ENCODE measurements at regions of chr1 and their contacts with region 1.

Region 1: GRCh38 chr1:19240673-19241538 is 10.4 kb downstream of the EMC1 start:
- DNase-seq: peak; percentile 71
- H3K4me3 Mint-ChIP-seq: no peak overlapping the region
- H3K27ac Mint-ChIP-seq: no peak overlapping the region
- H3K4me1 Mint-ChIP-seq: no peaks in the 10 kb centered on the region
- H3K27me3 Mint-ChIP-seq: no peaks in the 10 kb centered on the region

Region 2: DNA sequence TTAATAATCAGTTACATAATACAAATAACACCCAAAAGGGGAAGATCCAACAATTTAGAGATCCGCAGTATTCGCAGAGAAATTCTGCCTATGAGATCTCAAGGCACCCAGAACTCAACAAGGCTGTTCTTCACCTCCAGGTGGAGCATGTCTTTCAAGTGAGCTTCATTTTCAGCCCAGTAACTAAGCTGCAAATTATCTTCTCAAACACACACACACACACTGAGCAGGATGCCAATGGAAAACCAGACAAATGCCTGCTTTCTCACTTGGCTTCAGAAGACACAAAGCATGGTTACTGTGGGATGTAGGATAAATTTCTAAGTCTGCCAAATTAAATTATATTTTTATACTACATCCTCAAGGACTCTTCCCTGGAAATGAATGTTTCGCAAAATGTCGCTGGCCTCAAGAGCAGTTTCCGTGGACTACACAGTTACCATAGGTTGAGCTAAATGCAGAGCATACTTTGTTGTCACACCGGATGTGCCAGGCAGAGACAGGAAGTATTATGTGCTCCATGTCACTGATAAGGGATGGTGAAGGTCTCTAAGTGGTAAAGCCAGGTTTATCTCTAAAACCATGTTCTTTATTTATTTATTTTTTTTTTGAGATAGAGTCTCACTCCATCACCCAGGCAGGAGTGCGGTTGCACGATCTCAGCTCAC is 61.2 kb before region 1 on chr1:
- CTCF ChIA-PET with region 1: interaction called, 13 read pairs
- POLR2A ChIA-PET with region 1: no interaction called
- DNase-seq: peak; percentile 50
- H3K4me3 Mint-ChIP-seq: no peak overlapping the region
- H3K27ac Mint-ChIP-seq: peak overlapping the region; percentile 66
- H3K4me1 Mint-ChIP-seq: peaks cover 30% of the 10 kb centered on the region
- H3K27me3 Mint-ChIP-seq: no peaks in the 10 kb centered on the region

Region 3: GRCh38 chr1:19220080-19220846 is 20.6 kb before region 1 on chr1:
- CTCF ChIA-PET with region 1: no interaction called
- POLR2A ChIA-PET with region 1: no interaction called
- DNase-seq: no peak
- H3K4me3 Mint-ChIP-seq: no peak overlapping the region
- H3K27ac Mint-ChIP-seq: no peak overlapping the region
- H3K4me1 Mint-ChIP-seq: peaks cover 5% of the 10 kb centered on the region
- H3K27me3 Mint-ChIP-seq: no peaks in the 10 kb centered on the region

Region 4: DNA sequence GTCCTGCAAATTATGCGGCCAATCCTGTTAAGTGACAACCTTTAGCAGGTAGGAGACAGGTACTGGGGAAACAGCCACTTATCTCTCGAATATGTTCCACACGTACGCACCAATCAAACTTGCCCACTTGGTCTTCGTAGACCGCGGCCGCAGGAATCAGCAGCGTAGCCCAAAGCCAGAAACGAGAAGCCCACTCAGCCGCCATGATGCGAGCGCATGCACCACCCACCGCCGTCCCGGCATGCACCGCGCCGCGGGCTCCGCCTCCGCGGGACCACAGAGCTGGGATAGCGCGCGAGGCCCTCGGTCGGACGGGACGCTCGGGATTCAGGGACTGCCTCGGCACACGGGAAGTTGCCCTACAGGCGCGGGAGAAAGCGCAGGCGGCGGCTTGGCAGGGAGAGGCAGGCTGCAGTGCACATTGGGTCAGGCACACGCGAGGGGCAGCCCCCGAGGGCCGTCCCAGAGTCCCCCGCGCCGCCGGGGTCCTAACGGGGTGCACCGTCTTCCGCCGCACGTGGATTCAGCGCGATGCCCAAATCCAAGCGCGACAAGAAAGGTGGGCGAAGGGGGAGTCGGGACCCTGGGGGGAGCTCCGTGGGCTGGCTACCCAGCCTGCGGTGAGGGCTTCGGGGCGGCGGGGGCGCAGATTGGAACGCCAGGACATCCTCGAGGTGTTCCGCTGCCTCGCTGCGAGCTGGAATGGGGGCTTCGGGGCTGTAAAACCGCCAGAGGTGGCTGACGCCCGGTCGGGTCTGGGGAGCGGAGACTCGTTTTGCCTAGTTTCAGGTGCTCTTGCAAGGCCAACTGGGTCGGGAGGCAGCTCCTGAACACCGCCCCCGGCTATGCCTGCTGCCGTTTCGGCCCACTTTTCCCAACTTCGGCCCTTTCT is 10.6 kb after region 1 on chr1 and contains the starts of genes EMC1 and MRTO4:
- CTCF ChIA-PET with region 1: interaction called, 13 read pairs
- POLR2A ChIA-PET with region 1: interaction called, 9 read pairs
- DNase-seq: peak; percentile 91
- H3K4me3 Mint-ChIP-seq: peak within 1 kb of the TSS; percentile 94
- H3K27ac Mint-ChIP-seq: peak within 1 kb of the TSS; percentile 86
- H3K4me1 Mint-ChIP-seq: peaks cover 34% of the 10 kb centered on the region
- H3K27me3 Mint-ChIP-seq: no peaks in the 10 kb centered on the region
- total RNA-seq, gene EMC1: 25.3 to 29.1 TPM
- total RNA-seq, gene MRTO4: 21.1 to 23.0 TPM

Measured in activated CD4-positive, alpha-beta memory T cell treated with anti-CD3 and anti-CD28 coated beads, Interleukin-2, amount 10 ng/mL, durations not matched to agents 7 days and 5 days (primary cell).